Mammary epithelial cell (primary cell): ENCODE measurements at regions of chr2 and their contacts with region 1.

Region 1: GRCh38 chr2:69724540-69725159 is 17.3 kb upstream of the ANXA4 start:
- DNase-seq: peak; percentile 64
- H3K4me3 ChIP-seq: peak overlapping the region in 1 of 3 experiments; percentile 29
- H3K27ac ChIP-seq: no peak overlapping the region
- H3K4me1 ChIP-seq: no peaks in the 10 kb centered on the region
- H3K27me3 ChIP-seq: no peaks in the 10 kb centered on the region
- CTCF ChIP-seq: peak; percentile 86 to 87

Region 2: DNA sequence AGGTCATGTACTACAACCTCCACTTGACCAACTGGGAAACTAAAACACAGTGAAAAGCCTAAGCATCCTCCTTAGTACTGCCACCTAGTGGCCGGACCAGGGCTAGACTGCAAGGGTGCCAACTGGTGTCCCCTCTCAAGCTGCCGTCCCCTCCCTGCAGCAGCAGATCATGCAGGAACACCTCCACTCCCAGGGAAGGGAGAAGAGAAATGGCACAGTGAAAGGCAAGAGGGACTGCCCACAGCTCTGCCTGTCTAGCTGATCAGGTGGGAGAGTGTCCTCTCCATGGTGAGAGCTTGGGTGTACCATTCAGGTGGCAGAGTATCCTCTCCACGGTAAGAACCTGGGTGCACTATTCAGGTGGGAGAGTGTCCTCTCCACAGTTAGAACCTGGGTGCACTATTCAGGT is 159.2 kb before region 1 on chr2:
- CTCF ChIA-PET with region 1: no interaction called
- dilution Hi-C with region 1: loop called (anchors 25 kb)
- in situ Hi-C with region 1: no loop called
- intact Hi-C with region 1: no loop called
- DNase-seq: no peak
- H3K4me3 ChIP-seq: no peak overlapping the region
- H3K27ac ChIP-seq: no peak overlapping the region
- H3K4me1 ChIP-seq: peaks cover 27% of the 10 kb centered on the region
- H3K27me3 ChIP-seq: no peaks in the 10 kb centered on the region
- CTCF ChIP-seq: peak; percentile 67 to 84

Region 3: GRCh38 chr2:69798909-69799526 is 74.4 kb after region 1 on chr2:
- CTCF ChIA-PET with region 1: no interaction called
- dilution Hi-C with region 1: no loop called
- in situ Hi-C with region 1: no loop called
- intact Hi-C with region 1: loop called (anchors 1 kb)
- DNase-seq: peak; percentile 88
- H3K4me3 ChIP-seq: peak overlapping the region; percentile 5 to 42 (median 33)
- H3K27ac ChIP-seq: peak overlapping the region; percentile 87
- H3K4me1 ChIP-seq: peaks cover 21% of the 10 kb centered on the region
- H3K27me3 ChIP-seq: no peaks in the 10 kb centered on the region
- CTCF ChIP-seq: no peak

Region 4: DNA sequence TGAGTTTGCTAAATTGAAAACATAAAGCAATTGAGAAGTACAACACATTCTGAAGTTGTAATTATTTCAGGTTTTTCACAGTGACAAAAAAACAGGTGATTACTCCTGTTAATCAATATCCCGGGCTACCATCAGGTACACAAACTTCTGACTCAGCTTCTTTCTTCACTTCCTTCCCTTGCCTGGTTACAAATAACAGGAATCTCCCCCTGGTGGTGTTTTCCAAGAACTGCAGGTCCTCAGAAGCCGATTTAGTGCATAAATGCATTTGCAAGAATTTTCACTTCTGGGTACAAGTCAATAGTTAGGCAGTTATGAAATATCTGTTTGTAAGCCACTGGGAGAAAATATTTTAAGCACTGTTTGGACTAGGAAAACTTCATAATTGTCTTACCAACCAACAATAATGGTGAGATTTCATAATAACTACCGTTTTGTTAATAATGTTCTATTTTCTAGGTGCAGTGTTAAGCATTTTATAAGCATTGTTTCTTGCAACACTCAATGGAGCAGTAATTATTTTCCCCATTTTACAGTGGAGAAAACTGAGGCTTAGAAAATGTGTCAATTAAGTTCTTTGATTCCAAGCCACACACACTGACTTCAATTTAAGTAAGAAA is 92.4 kb after region 1 on chr2:
- CTCF ChIA-PET with region 1: interaction called, 45 read pairs
- dilution Hi-C with region 1: no loop called
- in situ Hi-C with region 1: loop called (anchors 5 kb)
- intact Hi-C with region 1: loop called (anchors 1 kb)
- DNase-seq: peak; percentile 77
- H3K4me3 ChIP-seq: no peak overlapping the region
- H3K27ac ChIP-seq: no peak overlapping the region
- H3K4me1 ChIP-seq: no peaks in the 10 kb centered on the region
- H3K27me3 ChIP-seq: no peaks in the 10 kb centered on the region
- CTCF ChIP-seq: peak; percentile 76 to 83

Region 5: DNA sequence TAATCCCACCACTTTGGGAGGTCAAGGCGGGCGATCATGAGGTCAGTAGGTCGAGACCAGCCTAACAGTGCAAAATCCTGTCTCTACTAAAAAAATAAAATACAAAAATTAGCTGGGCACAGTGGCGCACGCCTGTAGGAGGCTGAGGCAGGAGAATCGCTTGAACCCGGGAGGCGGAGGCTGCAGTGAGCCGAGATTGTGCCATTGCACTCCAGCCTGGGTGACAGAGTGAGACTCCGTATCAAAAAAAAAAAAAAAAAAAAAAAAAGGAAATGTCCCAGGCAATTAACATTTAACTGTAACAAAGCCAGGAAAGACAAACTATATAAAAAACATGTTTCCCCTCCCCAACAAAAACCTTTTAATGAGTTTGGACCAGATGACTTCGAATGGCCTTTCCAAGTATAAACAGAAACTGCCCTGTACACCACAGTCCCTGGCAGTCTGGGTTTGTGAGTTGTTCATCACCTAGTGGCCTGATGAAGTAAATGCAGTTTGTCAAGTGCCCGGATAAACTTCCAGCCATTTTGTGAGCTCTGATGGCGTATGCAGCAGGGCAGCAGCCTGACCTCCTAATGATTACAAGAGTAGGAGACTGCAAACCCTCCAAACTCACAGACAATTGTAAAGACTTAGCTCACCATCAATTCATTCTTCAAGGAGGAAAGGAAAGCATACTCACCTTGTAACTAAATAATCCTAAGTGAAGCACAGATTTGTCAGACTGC is 346.1 kb after region 1 on chr2:
- CTCF ChIA-PET with region 1: no interaction called
- dilution Hi-C with region 1: no loop called
- in situ Hi-C with region 1: no loop called
- intact Hi-C with region 1: loop called (anchors 10 kb)
- DNase-seq: peak; percentile 82
- H3K4me3 ChIP-seq: no peak overlapping the region
- H3K27ac ChIP-seq: peak overlapping the region; percentile 58
- H3K4me1 ChIP-seq: peaks cover 13% of the 10 kb centered on the region
- H3K27me3 ChIP-seq: no peaks in the 10 kb centered on the region
- CTCF ChIP-seq: peak; percentile 94

Region 6: DNA sequence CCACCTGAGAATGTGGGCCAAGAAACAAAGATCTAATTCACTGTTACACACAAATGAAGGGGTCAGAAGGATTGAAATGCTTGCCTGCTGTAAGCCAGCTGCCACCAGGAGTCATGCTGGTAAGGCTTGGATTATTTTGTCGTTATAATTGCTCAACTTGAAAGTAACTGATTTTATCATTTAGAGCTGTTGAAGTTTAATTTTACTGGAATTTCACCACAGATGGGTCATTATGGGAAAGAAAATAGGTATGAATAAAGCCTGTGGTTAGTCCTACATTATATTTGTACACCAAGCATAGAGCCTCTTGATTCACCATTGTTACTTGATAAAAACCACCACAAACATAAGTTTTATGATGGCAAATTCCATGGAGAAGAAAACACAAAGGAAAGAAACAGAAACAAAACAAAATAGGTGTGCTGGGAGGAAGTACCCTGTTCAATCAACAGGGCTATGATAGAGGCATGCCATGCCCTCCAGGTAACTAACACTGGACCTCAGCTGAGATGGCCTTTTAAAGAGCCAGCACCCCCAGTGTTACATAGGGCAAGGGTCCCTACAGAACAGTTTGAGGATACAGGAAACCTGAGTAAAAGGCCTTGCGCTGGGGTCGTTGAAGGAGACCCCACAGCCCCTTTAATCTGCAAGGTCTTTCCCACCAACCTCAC is 1092.8 kb after region 1 on chr2:
- CTCF ChIA-PET with region 1: no interaction called
- dilution Hi-C with region 1: no loop called
- in situ Hi-C with region 1: no loop called
- intact Hi-C with region 1: no loop called
- DNase-seq: no peak
- H3K4me3 ChIP-seq: no peak overlapping the region
- H3K27ac ChIP-seq: no peak overlapping the region
- H3K4me1 ChIP-seq: no peaks in the 10 kb centered on the region
- H3K27me3 ChIP-seq: peaks cover 4% of the 10 kb centered on the region
- CTCF ChIP-seq: no peak